ENCODE measurements at regions of chr16 and their contacts with region 1.

Region 1: DNA sequence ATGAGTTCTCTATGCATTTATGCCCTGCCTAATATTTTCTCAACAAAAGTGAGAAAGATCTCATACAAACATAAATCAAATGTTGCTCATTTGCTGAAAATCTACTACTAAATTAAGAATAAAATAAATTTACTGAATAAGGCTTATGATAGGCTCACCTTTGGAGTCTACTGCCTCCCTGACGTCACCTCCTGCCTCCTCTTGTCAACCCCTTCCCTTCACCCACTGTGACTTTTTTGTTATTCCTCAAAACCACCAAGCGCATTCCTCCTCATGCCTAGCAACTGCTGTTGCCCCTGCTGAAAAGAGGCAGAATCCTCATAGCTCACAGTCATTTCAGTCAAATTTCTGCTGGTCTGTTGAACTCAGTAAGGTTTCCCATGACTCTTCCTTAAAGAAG is 2422.2 kb downstream of the TP53TG3F start:
- DNase-seq: no peak
- ATAC-seq: no peak
- H3K4me3 ChIP-seq: no peak overlapping the region
- H3K27ac ChIP-seq: no peak overlapping the region
- H3K4me1 ChIP-seq: no peaks in the 10 kb centered on the region
- H3K27me3 ChIP-seq: no peaks in the 10 kb centered on the region
- CTCF ChIP-seq: no peak
- POLR2A ChIP-seq: no peak
- RAD21 ChIP-seq: no peak

Region 2: GRCh38 chr16:35585411-35585810 is 296.2 kb before region 1 on chr16:
- CTCF ChIA-PET with region 1: no interaction called
- POLR2A ChIA-PET with region 1: no interaction called
- RAD21 ChIA-PET with region 1: no interaction called
- intact Hi-C with region 1: loop called (anchors 10 kb)
- DNase-seq: no peak
- ATAC-seq: no peak
- H3K4me3 ChIP-seq: no peak overlapping the region
- H3K27ac ChIP-seq: no peak overlapping the region
- H3K4me1 ChIP-seq: no peaks in the 10 kb centered on the region
- H3K27me3 ChIP-seq: no peaks in the 10 kb centered on the region
- CTCF ChIP-seq: no peak
- POLR2A ChIP-seq: no peak
- RAD21 ChIP-seq: no peak

Region 3: DNA sequence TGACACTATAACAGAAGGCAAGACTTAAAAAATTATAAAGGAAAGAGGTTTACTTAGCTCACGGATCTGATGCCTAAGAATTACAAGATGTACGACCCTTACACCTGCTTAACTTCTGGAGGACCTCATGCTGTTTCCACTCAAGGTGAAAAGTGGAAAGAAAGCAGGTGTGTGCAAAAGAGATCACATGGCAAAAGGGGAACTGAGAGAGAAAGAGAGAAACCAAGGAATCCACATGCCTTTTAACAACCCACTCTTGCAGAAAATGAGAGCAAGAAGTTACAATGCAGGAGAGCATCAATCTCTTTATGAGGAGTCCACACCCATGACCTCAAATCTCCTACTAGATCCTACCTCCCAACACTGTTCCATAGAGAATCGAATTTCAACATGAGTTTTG is 40.0 kb before region 1 on chr16:
- CTCF ChIA-PET with region 1: no interaction called
- POLR2A ChIA-PET with region 1: no interaction called
- RAD21 ChIA-PET with region 1: no interaction called
- intact Hi-C with region 1: loop called (anchors 5 kb)
- DNase-seq: no peak
- ATAC-seq: no peak
- H3K4me3 ChIP-seq: no peak overlapping the region
- H3K27ac ChIP-seq: no peak overlapping the region
- H3K4me1 ChIP-seq: no peaks in the 10 kb centered on the region
- H3K27me3 ChIP-seq: no peaks in the 10 kb centered on the region
- CTCF ChIP-seq: no peak
- POLR2A ChIP-seq: no peak
- RAD21 ChIP-seq: no peak

Region 4: DNA sequence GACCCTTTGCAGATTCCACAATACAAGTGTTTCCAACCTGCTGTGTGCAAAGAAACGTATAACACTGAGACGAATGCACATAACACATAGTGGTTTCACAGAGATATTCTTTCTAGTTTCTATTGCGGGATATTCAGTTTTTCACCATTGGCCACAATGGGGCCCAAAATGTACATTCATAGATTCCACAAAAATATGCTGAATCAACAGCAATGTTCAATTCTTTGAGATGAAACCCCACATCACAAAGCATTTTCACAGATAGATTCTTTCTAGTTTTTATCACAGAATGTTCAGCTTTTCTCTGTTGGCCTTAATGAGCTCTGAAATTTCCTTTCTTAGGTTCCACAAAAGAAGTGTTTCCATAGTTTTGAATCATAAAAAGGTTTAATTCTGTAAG is 50.1 kb after region 1 on chr16:
- CTCF ChIA-PET with region 1: no interaction called
- POLR2A ChIA-PET with region 1: no interaction called
- RAD21 ChIA-PET with region 1: no interaction called
- intact Hi-C with region 1: loop called (anchors 5 kb)
- DNase-seq: no peak
- ATAC-seq: no peak
- H3K4me3 ChIP-seq: no peak overlapping the region
- H3K27ac ChIP-seq: no peak overlapping the region
- H3K4me1 ChIP-seq: no peaks in the 10 kb centered on the region
- H3K27me3 ChIP-seq: no peaks in the 10 kb centered on the region
- CTCF ChIP-seq: no peak
- POLR2A ChIP-seq: no peak
- RAD21 ChIP-seq: no peak